ENCODE measurements at regions of chr17 and their contacts with region 1.

Region 1: DNA sequence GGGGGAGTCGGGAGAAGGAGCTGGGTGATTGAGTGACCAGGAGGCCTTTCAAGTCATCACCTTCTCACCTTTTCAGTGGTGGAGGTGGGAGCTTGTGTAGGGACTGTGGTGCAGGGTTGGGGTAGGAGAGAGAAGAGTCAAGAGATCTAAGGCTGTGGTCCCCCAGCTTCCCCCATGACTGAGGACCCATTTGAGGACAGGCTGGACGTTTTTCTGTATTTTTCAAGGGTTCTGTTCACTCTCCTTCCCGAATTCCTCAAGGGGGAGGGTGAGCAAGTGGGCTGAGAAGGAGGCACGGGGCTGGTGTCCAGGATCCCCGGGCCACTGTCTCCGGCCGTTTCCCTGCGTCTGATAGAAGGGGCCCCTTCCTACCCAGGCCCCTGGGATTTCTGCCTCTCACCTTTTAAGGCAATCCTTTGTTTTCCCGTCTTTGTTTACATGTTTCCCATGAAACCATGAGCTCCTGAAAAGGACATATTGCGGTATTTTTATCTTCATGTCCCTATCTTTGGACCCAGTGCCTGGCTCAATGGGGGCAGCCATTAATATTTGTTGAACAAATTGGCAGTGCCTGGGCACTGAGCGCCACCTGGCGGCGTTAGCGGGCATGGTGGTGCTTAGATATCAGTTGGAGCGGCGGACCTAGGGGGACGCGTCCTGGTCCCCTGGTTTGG is 9.2 kb upstream of the CD300A start:
- DNase-seq: peak; percentile 90

Region 2: GRCh38 chr17:74224959-74225725 is 232.1 kb before region 1 on chr17:
- intact Hi-C with region 1: no loop called
- DNase-seq: no peak

Region 3: GRCh38 chr17:74305865-74306654 is 151.2 kb before region 1 on chr17:
- intact Hi-C with region 1: loop called (anchors 10 kb)
- DNase-seq: no peak

Region 4: DNA sequence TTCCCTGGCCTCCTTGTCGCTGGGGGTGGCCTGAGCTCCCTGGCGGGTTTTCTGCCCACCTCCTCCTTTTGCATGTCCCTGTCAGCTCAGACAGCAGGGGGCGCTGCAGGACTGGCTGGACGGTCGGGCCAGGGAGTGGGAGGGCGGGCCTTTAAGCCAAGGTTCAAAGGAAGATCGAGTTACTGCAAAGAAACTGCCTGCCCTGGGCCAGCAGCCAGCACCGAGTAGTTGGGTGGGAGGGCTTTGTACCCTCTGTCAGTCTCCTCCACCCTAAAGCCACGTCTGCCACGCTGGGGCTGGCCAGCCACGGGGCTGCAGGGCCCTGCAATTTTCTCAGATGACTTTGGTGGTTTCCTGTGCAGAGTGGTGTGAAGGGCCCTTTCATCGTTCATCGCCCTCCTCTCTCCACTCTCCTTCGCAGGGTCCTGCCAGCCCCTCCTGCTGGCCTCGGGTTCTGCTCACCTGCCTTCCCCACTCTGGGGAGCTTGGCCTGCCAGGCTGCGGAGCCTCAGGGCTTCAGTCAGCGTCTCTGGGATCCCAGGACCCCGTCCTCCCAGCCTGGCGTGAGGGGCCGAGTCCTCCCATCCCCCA is 77.7 kb before region 1 on chr17:
- intact Hi-C with region 1: loop called (anchors 1 kb)
- DNase-seq: peak; percentile 95

Measured in cardiac septum (tissue), 1 donor.